CD14-positive monocyte (primary cell): ENCODE measurements at regions of chr17 and their contacts with region 1.

Region 1: DNA sequence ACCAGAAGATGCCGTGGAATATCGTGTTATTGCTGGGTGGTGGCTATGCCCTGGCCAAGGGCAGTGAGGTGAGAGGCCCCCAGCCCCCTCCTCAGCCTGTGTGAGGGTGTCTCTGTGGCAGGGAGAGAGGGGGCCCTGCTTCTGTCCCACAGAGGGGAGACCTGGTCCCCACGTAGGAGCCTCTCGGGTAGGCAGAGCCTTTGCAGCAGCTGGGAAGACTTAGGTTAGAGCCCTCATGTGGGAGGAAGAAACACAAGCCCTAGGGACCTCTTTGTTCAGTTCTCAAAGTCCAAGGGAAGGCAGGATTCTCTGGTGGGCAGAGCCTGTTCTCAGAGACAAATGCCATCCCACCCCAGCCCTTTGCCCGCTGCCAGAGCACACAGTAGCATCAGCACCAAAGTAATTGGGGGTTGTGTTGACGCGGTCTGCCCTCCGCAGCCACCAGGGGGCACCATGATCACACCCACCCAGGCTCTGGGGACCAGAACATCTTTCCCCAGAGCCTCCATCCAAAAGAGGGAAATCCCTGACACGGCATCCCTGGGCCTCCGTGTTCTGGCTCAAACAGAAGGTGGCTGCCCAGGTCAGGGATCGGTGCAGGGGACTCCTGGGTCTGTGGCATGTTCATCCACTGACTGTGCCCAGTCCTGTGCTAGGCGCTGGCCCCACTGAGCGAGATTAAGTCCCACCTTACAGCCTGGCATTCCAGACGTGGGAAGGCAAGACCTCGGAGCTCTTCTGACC is 11.5 kb upstream of the FOXN1 start:
- DNase-seq: peak; percentile 57 to 72 (median 59)
- H3K4me3 ChIP-seq: no peak overlapping the region
- H3K4me3 Mint-ChIP-seq: no peak overlapping the region
- H3K27ac ChIP-seq: no peak overlapping the region
- H3K27ac Mint-ChIP-seq: no peak overlapping the region
- H3K4me1 ChIP-seq: no peaks in the 10 kb centered on the region
- H3K4me1 Mint-ChIP-seq: no peaks in the 10 kb centered on the region
- H3K27me3 ChIP-seq: no peaks in the 10 kb centered on the region
- H3K27me3 Mint-ChIP-seq: peaks cover 1 to 6% (median 3%) of the 10 kb centered on the region in 3 donors
- CTCF ChIP-seq: peak; percentile 94

Region 2: GRCh38 chr17:28540231-28540630 is 45.6 kb after region 1 on chr17:
- intact Hi-C with region 1: loop called (anchors 2 kb)
- DNase-seq: no peak
- H3K4me3 ChIP-seq: no peak overlapping the region
- H3K4me3 Mint-ChIP-seq: no peak overlapping the region
- H3K27ac ChIP-seq: no peak overlapping the region
- H3K27ac Mint-ChIP-seq: peak overlapping the region in 1 of 7 donors; percentile 57
- H3K4me1 ChIP-seq: no peaks in the 10 kb centered on the region
- H3K4me1 Mint-ChIP-seq: no peaks in the 10 kb centered on the region
- H3K27me3 ChIP-seq: no peaks in the 10 kb centered on the region
- H3K27me3 Mint-ChIP-seq: peaks cover 0 to 8% (median 4%) of the 10 kb centered on the region in 3 donors
- CTCF ChIP-seq: no peak

Region 3: DNA sequence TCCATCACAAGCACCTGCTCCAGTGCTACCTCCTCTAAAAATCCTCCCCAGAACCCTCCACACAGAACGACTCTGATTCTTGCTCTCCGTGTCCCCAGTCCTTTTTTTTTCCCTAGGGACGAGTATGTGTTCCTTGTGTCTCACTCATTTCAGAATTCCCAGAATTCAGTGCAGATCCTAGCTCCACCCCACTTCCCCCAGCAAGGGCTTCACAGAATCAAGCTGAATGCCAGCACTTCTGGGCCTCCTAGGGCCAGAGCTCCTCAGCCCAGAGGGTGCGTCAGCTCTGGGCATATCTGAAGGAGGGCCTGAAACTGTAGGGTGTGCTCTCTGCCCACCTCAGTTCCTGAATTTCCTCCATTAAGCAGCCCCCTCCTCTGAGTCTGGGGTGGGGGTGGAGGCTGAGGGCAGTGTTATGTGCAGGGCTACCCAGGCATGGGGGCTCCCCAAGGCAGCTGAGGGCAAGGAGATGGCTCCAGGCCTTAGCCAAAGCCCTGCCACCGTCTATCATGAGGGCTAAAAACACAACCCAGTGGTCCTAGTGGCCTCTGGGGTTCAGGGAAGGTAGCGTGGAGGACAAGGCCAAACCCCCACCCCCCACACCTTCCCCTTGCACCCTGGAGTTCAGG is 51.3 kb after region 1 on chr17:
- intact Hi-C with region 1: loop called (anchors 2 kb)
- DNase-seq: no peak
- H3K4me3 ChIP-seq: no peak overlapping the region
- H3K4me3 Mint-ChIP-seq: no peak overlapping the region
- H3K27ac ChIP-seq: no peak overlapping the region
- H3K27ac Mint-ChIP-seq: no peak overlapping the region
- H3K4me1 ChIP-seq: peaks cover 42 to 43% of the 10 kb centered on the region in 2 donors
- H3K4me1 Mint-ChIP-seq: peaks cover 39% of the 10 kb centered on the region
- H3K27me3 ChIP-seq: no peaks in the 10 kb centered on the region
- H3K27me3 Mint-ChIP-seq: peaks cover 0 to 8% (median 2%) of the 10 kb centered on the region in 3 donors
- CTCF ChIP-seq: no peak

Region 4: DNA sequence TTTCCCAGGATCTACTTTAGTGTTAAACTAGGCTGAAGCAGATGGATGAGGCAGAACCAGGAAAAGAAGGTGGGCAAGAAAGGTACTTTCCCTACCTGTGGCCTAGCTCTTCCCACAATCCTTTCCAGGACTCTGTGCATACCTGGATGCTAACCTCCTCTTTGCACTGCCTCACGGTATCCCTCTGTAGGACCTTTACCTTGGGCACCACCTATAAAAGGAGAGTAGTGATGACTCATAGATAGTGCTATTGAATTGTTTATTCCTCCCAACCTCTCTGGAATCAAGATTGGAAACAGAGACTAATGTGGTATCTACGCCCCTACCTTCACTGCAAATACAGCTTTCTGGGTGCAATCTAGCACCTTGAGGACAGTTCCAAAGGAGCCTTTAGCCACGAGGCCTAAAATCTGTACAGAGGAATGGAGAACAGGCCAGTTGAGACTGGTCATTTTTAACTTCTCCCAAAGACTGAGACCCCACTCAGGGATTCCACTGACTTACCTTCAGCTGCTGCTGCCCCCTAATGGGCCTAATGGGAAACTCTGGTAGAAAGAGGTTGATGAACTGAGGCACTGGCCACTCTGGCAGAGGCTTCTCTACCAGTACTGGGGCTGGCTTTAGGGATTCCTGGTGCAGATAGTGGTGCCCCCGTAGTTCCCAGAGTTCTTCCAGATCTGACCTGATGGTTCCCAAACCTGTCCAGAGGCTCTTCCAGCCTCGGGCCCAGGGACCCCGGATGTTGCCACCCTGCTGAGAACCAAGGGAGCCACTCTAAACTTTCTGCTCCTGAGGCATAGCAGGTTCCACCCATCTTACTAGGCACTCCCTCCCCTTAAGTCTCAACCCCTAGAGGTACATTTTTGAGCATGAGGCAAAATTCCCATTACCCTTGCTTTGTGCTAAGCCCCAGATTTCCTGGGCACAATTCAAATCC is 118.6 kb after region 1 on chr17:
- intact Hi-C with region 1: loop called (anchors 2 kb)
- DNase-seq: peak in 2 of 3 donors; percentile 20 to 28
- H3K4me3 ChIP-seq: no peak overlapping the region
- H3K4me3 Mint-ChIP-seq: no peak overlapping the region
- H3K27ac ChIP-seq: peak overlapping the region in 1 of 2 donors; percentile 42
- H3K27ac Mint-ChIP-seq: peak overlapping the region in 3 of 7 donors; percentile 6 to 46 (median 25)
- H3K4me1 ChIP-seq: no peaks in the 10 kb centered on the region
- H3K4me1 Mint-ChIP-seq: no peaks in the 10 kb centered on the region
- H3K27me3 ChIP-seq: no peaks in the 10 kb centered on the region
- H3K27me3 Mint-ChIP-seq: peaks cover 0 to 1% (median 0%) of the 10 kb centered on the region in 3 donors
- CTCF ChIP-seq: peak; percentile 81